Transverse colon (tissue), 4 donors: ENCODE measurements at regions of chr15 and their contacts with region 1.

Region 1: GRCh38 chr15:84023636-84024035 is 211.9 kb upstream of the GOLGA6L4 start:
- DNase-seq: peak; percentile 15
- H3K4me3 ChIP-seq: no peak overlapping the region
- H3K27ac ChIP-seq: no peak overlapping the region
- H3K4me1 ChIP-seq: no peaks in the 10 kb centered on the region
- H3K27me3 ChIP-seq: no peaks in the 10 kb centered on the region
- CTCF ChIP-seq: peak in 4 of 5 experiments; percentile 32 to 43 (median 41)
- EP300 ChIP-seq: no peak
- POLR2A ChIP-seq: no peak

Region 2: DNA sequence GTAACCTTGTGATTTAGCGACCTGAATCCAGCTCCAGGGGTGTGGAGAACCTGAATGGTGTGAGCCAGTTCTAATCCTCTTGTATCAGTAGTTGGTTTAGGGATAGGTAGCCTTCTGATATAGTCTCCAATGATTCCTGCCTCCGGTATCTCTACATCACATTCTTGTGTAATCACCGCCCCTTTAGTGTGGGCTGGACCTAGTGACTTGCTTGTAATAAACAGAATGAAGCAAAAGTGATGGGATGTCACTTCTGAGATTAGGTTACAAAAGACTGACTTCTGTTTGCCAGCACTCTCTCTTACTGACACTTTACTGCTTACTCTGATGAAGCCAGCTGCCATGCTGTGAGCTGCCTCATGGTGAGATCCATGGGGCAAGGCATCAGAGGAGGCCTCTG is 879.4 kb before region 1 on chr15:
- in situ Hi-C with region 1: no loop called
- intact Hi-C with region 1: no loop called
- DNase-seq: no peak
- H3K4me3 ChIP-seq: no peak overlapping the region
- H3K27ac ChIP-seq: no peak overlapping the region
- H3K4me1 ChIP-seq: no peaks in the 10 kb centered on the region
- H3K27me3 ChIP-seq: no peaks in the 10 kb centered on the region
- CTCF ChIP-seq: no peak
- EP300 ChIP-seq: no peak
- POLR2A ChIP-seq: no peak

Region 3: GRCh38 chr15:83571820-83572707 is 451.6 kb before region 1 on chr15:
- in situ Hi-C with region 1: loop called in 2 of 4 experiments (anchors 25 kb)
- intact Hi-C with region 1: loop called (anchors 10 kb)
- DNase-seq: no peak
- H3K4me3 ChIP-seq: no peak overlapping the region
- H3K27ac ChIP-seq: no peak overlapping the region
- H3K4me1 ChIP-seq: no peaks in the 10 kb centered on the region
- H3K27me3 ChIP-seq: no peaks in the 10 kb centered on the region
- CTCF ChIP-seq: peak in 4 of 5 experiments; percentile 25 to 48 (median 43)
- EP300 ChIP-seq: no peak
- POLR2A ChIP-seq: no peak

Region 4: DNA sequence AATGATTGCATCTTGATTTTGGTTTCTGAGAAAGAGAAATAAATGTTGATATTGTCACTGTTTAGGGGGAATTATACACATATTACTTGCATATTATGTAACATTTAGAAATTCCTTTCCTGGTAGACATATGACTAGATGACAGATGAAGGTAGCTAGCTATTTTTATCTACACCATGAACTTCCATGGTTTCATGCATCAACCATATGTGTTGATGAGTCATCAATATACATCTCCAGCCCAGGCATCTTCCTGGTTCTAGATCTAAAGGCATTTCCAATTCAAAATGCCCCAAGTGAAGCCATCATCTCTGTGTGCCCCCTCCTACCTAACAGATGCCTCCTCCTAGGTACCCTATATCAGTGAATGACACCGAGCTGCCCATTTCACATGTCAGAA is 379.2 kb before region 1 on chr15:
- in situ Hi-C with region 1: no loop called
- intact Hi-C with region 1: loop called (anchors 10 kb)
- DNase-seq: no peak
- H3K4me3 ChIP-seq: no peak overlapping the region
- H3K27ac ChIP-seq: no peak overlapping the region
- H3K4me1 ChIP-seq: no peaks in the 10 kb centered on the region
- H3K27me3 ChIP-seq: no peaks in the 10 kb centered on the region
- CTCF ChIP-seq: no peak
- EP300 ChIP-seq: no peak
- POLR2A ChIP-seq: no peak

Region 5: DNA sequence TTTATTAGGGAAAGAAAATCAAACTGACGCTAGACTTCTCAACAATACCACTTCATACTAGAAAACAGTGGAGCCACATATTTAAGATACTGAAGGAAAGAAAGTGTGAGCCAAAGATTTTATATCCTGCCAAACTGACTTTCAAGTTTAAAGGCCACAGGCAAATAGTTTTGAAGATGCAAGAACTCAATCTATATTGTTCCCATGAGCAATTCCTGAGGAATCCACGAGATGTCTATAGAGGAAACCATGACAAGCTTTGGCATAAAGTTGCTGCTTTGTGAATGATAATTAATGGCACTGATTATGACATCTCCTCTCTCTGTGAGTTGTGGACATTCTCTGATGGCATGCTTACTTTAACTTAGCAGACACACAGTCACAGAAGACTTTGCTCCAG is 64.2 kb before region 1 on chr15:
- in situ Hi-C with region 1: no loop called
- intact Hi-C with region 1: no loop called
- DNase-seq: no peak
- H3K4me3 ChIP-seq: no peak overlapping the region
- H3K27ac ChIP-seq: no peak overlapping the region
- H3K4me1 ChIP-seq: no peaks in the 10 kb centered on the region
- H3K27me3 ChIP-seq: no peaks in the 10 kb centered on the region
- CTCF ChIP-seq: no peak
- EP300 ChIP-seq: no peak
- POLR2A ChIP-seq: no peak